Vagina (tissue), 2 donors: ENCODE measurements at regions of chr10 and their contacts with region 1.

Region 1: GRCh38 chr10:35126530-35127296 is at the start of gene CREM:
- DNase-seq: peak; percentile 98 to 99
- H3K4me3 ChIP-seq: peak within 1 kb of the TSS; percentile 84 to 97
- H3K27ac ChIP-seq: peak within 1 kb of the TSS; percentile 100
- H3K4me1 ChIP-seq: peaks cover 45% of the 10 kb centered on the region
- H3K27me3 ChIP-seq: no peaks in the 10 kb centered on the region
- CTCF ChIP-seq: peak in 2 of 3 experiments; percentile 85
- POLR2A ChIP-seq: peak; percentile 57 to 99
- total RNA-seq, gene CREM: 32.9 TPM

Region 2: DNA sequence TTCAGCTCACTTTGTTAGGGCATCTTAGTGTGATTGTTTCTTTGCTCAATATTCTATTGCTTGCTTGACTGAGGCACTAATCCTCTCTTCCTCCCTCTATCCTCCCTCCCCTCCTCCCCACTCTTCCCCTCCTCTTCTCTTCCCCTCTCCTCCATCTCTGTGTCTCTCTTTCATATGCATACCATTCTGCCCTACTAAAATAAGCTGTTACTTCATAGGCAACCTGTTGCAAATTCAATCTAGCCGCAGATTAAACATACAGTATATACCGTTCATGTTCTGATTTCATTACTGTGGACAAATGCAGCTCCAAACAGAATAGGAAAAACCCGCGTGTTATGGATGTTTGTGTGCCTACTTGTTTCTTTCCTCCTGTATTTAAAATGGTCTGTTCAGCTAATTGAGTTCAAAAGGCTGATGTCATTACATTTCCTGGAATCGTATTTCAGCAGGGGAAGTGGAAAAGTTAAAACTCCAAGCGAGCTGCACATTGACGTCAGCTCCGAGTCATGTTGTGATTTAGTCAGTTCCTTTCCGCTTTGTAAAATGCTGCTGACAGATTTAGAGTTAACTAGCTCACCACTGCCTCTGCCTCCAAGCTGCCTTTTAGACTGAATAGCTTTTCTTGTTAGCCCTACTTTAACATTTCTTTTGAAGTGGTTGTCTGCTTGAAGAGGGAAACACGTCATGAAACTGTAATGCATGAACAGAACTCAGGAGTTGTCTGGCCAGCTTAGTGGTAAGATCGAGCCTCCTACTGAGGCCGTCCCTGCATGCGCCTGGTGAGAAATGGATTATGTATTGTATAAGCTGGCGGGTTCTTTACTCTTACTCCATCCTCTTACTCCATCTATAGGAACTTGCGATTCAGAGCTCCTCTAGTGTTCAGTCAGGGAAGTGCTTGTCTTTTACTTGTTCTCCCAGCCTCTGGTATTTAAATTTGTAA is 68.9 kb after region 1 on chr10:
- intact Hi-C with region 1: loop called (anchors 2 kb)
- DNase-seq: peak in 1 of 2 donors; percentile 94
- H3K4me3 ChIP-seq: peak overlapping the region; percentile 46 to 53
- H3K27ac ChIP-seq: peak overlapping the region; percentile 95
- H3K4me1 ChIP-seq: peaks cover 13% of the 10 kb centered on the region
- H3K27me3 ChIP-seq: no peaks in the 10 kb centered on the region
- CTCF ChIP-seq: peak; percentile 66 to 89 (median 80)
- POLR2A ChIP-seq: peak in 1 of 2 donors; percentile 26

Region 3: GRCh38 chr10:35218339-35218955 is 91.7 kb after region 1 on chr10:
- intact Hi-C with region 1: loop called (anchors 5 kb)
- DNase-seq: peak in 1 of 2 donors; percentile 78
- H3K4me3 ChIP-seq: no peak overlapping the region
- H3K27ac ChIP-seq: no peak overlapping the region
- H3K4me1 ChIP-seq: peaks cover 9% of the 10 kb centered on the region
- H3K27me3 ChIP-seq: no peaks in the 10 kb centered on the region
- CTCF ChIP-seq: peak; percentile 64 to 87 (median 65)
- POLR2A ChIP-seq: no peak

Region 4: GRCh38 chr10:35336084-35336831 is 209.5 kb after region 1 on chr10 and contains the start of gene CCNY:
- intact Hi-C with region 1: loop called (anchors 10 kb)
- DNase-seq: no peak
- H3K4me3 ChIP-seq: peak within 1 kb of the TSS; percentile 85 to 99
- H3K27ac ChIP-seq: peak within 1 kb of the TSS; percentile 93
- H3K4me1 ChIP-seq: peaks cover 75% of the 10 kb centered on the region
- H3K27me3 ChIP-seq: no peaks in the 10 kb centered on the region
- CTCF ChIP-seq: no peak
- POLR2A ChIP-seq: peak in 1 of 2 donors; percentile 60
- total RNA-seq, gene CCNY: 28.5 TPM